ENCODE measurements at regions of chr13 and their contacts with region 1.

Region 1: GRCh38 chr13:95834134-95834765 is 157.3 kb downstream of the DNAJC3 start:
- DNase-seq: peak; percentile 55
- ATAC-seq: peak; percentile 71 to 77

Region 2: DNA sequence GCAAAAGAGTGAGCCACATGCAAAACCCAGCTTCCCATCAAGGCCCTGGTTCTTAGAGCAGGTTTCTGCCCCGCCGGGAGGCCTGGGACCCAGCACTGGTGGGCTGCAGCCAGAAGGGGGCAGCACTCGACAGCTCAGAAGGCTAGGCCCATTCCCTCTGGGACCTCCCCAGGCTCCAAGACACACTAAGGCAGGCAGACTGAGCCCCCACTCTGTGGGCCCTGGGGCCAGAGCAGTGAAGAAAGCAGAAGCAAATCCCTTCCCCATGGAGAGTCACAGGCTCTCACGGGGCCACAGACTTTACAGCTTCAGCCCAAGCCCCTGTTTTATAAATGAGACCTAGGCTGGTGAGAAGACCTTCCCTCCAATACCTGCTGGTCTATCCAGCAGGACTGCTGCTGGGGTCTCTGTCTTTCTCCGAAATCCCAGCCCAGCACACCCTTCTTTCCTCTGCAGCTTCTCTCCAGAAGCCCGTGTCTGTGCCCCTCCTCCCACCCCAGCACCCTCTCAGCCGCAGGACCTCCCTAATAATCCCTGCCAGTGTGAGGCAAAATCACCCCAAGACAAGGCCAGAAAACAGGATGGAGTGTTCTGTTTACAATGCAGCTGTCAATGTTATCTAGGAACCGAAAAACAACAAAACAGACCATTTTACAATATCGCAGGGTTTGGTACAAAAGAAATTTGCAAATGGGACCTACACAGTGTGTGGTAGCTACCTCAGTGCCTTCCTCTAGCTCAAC is 642.3 kb before region 1 on chr13:
- intact Hi-C with region 1: loop called in 1 of 2 experiments (anchors 10 kb)
- DNase-seq: peak; percentile 77
- ATAC-seq: peak; percentile 87 to 90

Region 3: DNA sequence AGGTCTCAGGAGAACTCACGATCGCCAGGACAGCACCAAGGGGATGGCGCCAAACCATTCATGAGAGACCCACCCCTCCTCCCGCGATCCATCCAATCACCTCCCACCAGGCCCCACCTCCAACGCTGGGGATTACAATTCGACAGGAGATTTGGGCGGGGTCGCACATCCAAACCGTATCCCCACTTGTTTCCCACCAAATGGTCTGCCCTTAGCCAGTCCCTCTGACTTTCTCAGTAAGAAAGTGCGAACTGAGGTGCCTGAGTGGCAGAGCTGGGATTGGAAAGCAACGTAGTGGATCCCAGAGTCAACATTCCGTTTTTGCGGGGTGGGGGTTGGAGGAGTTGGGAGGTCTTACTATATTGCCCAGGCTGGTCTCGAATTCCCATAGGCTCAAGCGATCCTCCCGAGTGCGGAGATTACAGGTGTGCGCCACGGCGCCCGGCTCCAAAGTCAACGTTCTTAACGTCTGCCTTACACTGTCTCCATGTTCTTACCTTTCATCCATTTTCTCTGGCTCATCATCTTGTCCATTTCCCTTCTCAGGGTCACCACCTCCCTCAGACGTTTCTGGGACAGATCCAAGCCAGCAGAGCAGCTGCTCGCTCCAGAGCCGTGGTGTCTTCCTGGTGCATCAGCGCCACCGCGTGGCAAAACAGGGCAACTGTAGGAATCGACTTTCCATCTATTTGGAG is 430.3 kb before region 1 on chr13:
- intact Hi-C with region 1: loop called in 1 of 2 experiments (anchors 10 kb)
- DNase-seq: peak; percentile 80
- ATAC-seq: peak; percentile 93 to 95

Region 4: DNA sequence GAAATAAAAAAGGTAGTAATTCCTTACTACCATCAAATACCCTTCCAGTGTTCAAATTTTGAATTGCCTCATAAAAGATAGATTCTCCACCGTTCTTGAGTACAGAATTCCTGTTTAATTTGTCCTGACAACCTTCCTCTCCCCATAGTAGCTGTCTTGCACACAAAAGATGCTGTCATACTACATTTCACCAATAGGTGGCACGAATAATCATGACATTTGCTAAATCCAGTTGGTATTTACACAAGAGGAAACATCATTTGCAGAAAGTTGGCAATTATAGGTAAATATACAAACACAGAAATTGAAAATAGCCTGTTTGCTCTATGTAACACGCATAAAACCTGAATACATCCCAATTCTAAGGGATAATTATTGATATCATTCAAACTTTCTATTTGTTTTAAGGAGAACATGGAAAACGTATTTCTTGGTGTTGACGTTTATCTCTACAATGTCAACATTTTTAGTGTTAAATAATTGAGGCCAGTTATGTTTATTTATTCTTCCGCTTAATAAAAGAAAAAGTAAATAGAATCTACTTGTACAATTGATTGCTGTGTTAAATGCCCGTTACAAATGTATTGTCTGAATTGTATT is 340.1 kb before region 1 on chr13:
- intact Hi-C with region 1: loop called in 1 of 2 experiments (anchors 10 kb)
- DNase-seq: no peak
- ATAC-seq: no peak

Region 5: GRCh38 chr13:95536632-95537241 is 297.5 kb before region 1 on chr13:
- intact Hi-C with region 1: loop called in 1 of 2 experiments (anchors 5 kb)
- DNase-seq: no peak
- ATAC-seq: no peak

Region 6: DNA sequence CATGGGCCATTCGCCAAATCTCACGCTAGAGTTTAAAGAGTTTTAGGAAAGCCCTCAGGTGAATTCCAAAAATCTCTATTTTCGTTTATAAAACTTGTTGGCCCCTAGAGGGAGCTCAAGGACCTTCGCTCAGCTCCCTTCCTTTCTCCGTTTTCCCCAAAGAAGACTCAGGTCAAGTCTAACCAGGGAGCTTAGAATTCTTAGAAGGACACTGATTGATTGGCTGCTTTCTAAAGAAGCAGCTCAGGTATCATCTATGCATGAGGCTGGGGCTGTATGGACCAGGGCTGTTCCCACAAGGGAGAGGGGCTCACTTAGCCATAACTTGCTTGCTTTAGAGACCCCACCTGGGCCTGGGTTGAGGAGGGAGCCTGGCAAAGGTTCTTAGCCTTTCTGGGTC is 210.2 kb before region 1 on chr13:
- intact Hi-C with region 1: loop called (anchors 2 to 5 kb)
- DNase-seq: no peak
- ATAC-seq: peak in 1 of 2 donors; percentile 24

Region 7: GRCh38 chr13:96065849-96066248 is 231.6 kb after region 1 on chr13:
- intact Hi-C with region 1: no loop called
- DNase-seq: no peak
- ATAC-seq: no peak

Measured in left cardiac atrium (tissue), 4 donors.